ENCODE measurements at regions of chr12 and their contacts with region 1.

Region 1: GRCh38 chr12:48183091-48183875 is at the start of gene CCDC184:
- DNase-seq: peak; percentile 90
- H3K4me3 ChIP-seq: peak within 1 kb of the TSS; percentile 67
- H3K27ac ChIP-seq: no peak within 1 kb of the TSS
- H3K4me1 ChIP-seq: peaks cover 30% of the 10 kb centered on the region
- H3K27me3 ChIP-seq: peaks cover 15% of the 10 kb centered on the region
- CTCF ChIP-seq: peak; percentile 53
- total RNA-seq, gene CCDC184: 0.63 and 0.69 TPM in 2 replicates

Region 2: GRCh38 chr12:47963340-47964040 is 219.8 kb before region 1 on chr12 and contains the start of gene TMEM106C:
- CTCF ChIA-PET with region 1: no interaction called
- POLR2A ChIA-PET with region 1: no interaction called
- intact Hi-C with region 1: loop called (anchors 10 kb)
- DNase-seq: peak; percentile 95
- H3K4me3 ChIP-seq: peak within 1 kb of the TSS; percentile 69
- H3K27ac ChIP-seq: peak within 1 kb of the TSS; percentile 26
- H3K4me1 ChIP-seq: peaks cover 6% of the 10 kb centered on the region
- H3K27me3 ChIP-seq: no peaks in the 10 kb centered on the region
- CTCF ChIP-seq: peak; percentile 99
- total RNA-seq, gene TMEM106C: 166 and 182 TPM in 2 replicates

Region 3: GRCh38 chr12:48001505-48002413 is 181.5 kb before region 1 on chr12:
- CTCF ChIA-PET with region 1: no interaction called
- POLR2A ChIA-PET with region 1: no interaction called
- intact Hi-C with region 1: loop called (anchors 10 kb)
- DNase-seq: peak; percentile 73
- H3K4me3 ChIP-seq: peak overlapping the region; percentile 46
- H3K27ac ChIP-seq: no peak overlapping the region
- H3K4me1 ChIP-seq: peaks cover 26% of the 10 kb centered on the region
- H3K27me3 ChIP-seq: peaks cover 60% of the 10 kb centered on the region
- CTCF ChIP-seq: no peak

Region 4: DNA sequence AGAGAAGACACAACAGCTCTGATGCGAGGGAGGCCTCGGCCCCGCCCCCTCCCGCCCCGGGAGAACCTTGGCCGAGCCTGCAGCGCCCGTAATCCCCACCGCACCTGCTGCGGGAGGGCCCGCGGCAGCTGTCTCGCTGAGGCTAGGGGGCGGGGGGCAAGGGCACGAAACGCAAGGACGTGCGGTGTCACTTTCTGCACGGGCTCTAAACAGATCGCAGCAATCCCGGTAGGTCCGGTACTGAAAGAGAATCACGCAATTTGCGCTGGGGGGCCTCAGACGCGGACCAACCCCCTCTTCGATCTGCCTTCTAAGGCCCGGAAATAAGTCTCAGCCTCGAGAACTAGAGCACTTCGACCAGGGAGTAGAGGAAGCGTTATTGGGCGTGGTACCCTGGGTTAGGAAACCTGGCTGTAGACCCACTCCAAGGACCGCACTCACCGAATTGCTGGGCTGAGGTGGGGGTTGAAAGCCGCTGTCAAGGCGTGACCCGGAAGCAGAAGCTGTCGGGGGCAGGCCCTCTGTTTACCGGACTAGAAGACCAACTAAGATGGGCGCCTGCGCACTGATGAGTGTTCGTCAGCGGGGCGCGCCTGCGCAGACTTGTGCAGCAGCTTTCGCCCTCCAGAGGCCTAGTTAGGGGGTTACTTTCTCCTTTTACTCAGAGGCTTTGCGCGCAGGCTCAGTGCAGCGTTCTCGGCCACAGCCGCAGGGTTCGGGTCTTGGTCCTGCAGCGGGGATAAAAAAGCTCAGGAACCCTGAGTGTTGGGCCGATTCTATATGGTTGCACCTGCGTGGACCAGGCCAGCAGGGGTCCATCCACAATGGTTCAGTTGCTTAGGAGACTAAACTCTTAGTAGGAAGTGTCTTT is 26.0 kb before region 1 on chr12 and contains the start of gene ASB8:
- CTCF ChIA-PET with region 1: no interaction called
- POLR2A ChIA-PET with region 1: interaction called, 12 read pairs
- intact Hi-C with region 1: no loop called
- DNase-seq: peak; percentile 98
- H3K4me3 ChIP-seq: peak within 1 kb of the TSS; percentile 74
- H3K27ac ChIP-seq: peak within 1 kb of the TSS; percentile 52
- H3K4me1 ChIP-seq: peaks cover 4% of the 10 kb centered on the region
- H3K27me3 ChIP-seq: no peaks in the 10 kb centered on the region
- CTCF ChIP-seq: peak; percentile 55
- total RNA-seq, gene ASB8: 23.5 and 24.1 TPM in 2 replicates

Region 5: GRCh38 chr12:48454667-48455066 is 271.4 kb after region 1 on chr12:
- CTCF ChIA-PET with region 1: no interaction called
- POLR2A ChIA-PET with region 1: no interaction called
- intact Hi-C with region 1: loop called (anchors 10 kb)
- DNase-seq: peak; percentile 53
- H3K4me3 ChIP-seq: no peak overlapping the region
- H3K27ac ChIP-seq: no peak overlapping the region
- H3K4me1 ChIP-seq: no peaks in the 10 kb centered on the region
- H3K27me3 ChIP-seq: no peaks in the 10 kb centered on the region
- CTCF ChIP-seq: peak; percentile 58

Region 6: DNA sequence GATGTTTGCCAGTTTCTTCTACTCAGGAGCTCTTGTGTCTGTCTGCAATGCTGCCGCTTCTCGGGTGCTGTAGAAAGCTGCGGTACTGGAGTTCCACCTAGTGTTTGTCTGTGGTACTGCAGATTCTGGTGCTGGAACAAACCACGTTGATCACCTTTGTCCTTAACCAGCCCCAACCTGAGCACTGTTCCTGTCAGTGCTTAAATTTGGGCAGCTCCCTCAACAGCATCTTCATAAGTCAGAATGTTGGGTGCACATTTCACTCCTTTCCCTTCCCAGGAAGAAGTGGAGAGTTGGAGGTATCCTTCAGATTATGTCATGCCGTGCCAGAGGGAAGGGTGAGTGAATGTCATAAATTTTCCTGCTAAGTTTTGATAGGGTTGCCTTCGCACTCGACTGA is 435.3 kb after region 1 on chr12:
- CTCF ChIA-PET with region 1: interaction called, 3 read pairs
- POLR2A ChIA-PET with region 1: no interaction called
- intact Hi-C with region 1: loop called (anchors 10 kb)
- DNase-seq: peak; percentile 80
- H3K4me3 ChIP-seq: no peak overlapping the region
- H3K27ac ChIP-seq: no peak overlapping the region
- H3K4me1 ChIP-seq: no peaks in the 10 kb centered on the region
- H3K27me3 ChIP-seq: no peaks in the 10 kb centered on the region
- CTCF ChIP-seq: peak; percentile 98